T-cell (primary cell): ENCODE measurements at regions of chr3 and their contacts with region 1.

Region 1: DNA sequence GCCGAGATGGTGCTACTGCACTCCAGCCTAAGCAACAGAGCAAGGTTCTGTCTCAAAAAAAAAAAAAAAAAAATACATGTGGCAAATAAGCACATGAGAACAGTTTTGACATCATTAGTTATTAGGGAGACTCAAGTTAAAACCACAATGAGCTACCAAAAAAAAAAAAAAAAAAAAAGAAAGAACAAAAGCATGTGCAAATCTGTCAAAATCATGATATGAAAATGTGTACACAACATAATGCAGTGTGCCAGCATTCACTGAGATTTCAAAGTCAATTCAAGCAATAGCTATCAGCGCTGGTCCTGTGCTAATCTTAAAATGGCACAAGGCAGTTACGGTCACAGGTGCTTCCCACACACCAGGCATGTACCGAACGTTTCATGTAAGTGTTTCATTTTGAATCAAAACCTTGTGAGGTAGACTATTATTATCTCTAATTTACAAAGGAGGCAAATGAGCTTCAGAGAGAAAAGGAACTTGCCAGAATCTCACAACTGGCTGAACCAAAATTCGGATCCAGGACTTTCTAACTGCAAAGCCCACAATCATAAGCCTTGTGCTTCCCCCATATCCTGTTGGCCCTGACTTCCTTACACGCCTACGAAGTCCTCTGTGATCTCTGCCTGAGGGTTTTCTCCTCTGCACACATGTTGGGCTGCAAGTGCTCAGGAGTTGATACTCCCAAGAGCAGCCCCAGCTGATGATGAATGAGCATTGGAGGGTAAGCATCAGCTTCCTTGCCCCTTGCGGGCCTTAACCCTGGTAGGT is 200.1 kb upstream of the PROK2 start:
- DNase-seq: peak in 2 of 35 experiments; percentile 5 to 21
- ATAC-seq: peak; percentile 31 to 82 (median 54)
- H3K4me3 ChIP-seq: peak overlapping the region in 1 of 2 donors; percentile 5
- H3K4me3 Mint-ChIP-seq: peak overlapping the region; percentile 40 to 66 (median 46)
- H3K27ac ChIP-seq: no peak overlapping the region
- H3K27ac Mint-ChIP-seq: peak overlapping the region in 1 of 2 donors; percentile 60
- H3K4me1 ChIP-seq: peaks cover 2 to 4% of the 10 kb centered on the region in 2 experiments
- H3K4me1 Mint-ChIP-seq: peaks cover 9 to 13% (median 13%) of the 10 kb centered on the region in 3 donors
- H3K27me3 ChIP-seq: no peaks in the 10 kb centered on the region
- H3K27me3 Mint-ChIP-seq: no peaks in the 10 kb centered on the region

Region 2: GRCh38 chr3:71873093-71873611 is 111.9 kb before region 1 on chr3:
- CTCF ChIA-PET with region 1: no interaction called
- POLR2A ChIA-PET with region 1: no interaction called
- DNase-seq: no peak
- ATAC-seq: no peak
- H3K4me3 ChIP-seq: no peak overlapping the region
- H3K4me3 Mint-ChIP-seq: peak overlapping the region in 1 of 3 donors; percentile 25
- H3K27ac ChIP-seq: no peak overlapping the region
- H3K27ac Mint-ChIP-seq: peak overlapping the region in 1 of 2 donors; percentile 22
- H3K4me1 ChIP-seq: peaks cover 0 to 3% of the 10 kb centered on the region in 2 experiments
- H3K4me1 Mint-ChIP-seq: peaks cover 13 to 18% (median 17%) of the 10 kb centered on the region in 3 donors
- H3K27me3 ChIP-seq: no peaks in the 10 kb centered on the region
- H3K27me3 Mint-ChIP-seq: peaks cover 0 to 7% of the 10 kb centered on the region in 2 donors

Region 3: DNA sequence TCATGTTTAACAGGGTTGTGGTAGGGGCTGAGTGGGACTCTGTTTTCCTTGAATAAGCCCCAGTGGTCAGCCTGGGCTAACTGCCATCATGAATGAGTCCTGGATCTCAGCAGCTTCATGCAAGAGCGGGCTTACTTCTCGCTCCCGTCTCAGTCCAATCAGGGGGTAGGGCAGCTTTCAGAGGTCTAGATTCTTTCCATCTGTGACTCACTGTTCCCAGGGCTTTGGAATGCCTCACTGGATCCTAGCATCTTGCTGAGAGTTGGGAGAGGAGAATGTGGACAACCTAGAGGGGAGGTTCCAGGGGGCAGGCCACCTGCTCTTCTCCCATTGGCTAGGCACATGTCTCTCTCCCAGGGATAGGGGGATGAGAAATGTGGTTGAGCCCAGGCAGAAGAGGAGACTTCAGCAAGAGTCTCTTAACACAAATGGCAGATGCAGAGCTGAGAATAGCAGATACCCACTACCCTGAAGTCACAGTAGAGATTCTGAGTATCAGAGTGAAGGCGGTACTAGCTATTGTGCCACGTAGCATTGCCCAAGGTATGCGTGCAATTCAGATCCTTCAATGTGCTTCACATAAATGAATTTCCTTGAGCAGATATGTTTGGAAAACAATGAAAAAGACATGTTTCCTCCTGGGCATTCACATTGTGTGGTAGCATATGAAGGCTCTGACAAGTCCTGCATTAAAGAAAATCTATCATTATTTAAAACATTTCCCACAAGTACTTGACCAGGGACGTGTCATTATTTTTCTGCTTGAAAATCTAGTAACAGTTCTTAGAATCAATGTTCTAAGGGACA is 57.6 kb after region 1 on chr3:
- CTCF ChIA-PET with region 1: no interaction called
- POLR2A ChIA-PET with region 1: interaction called in 1 of 2 experiments, 12 read pairs
- DNase-seq: no peak
- ATAC-seq: no peak
- H3K4me3 ChIP-seq: no peak overlapping the region
- H3K4me3 Mint-ChIP-seq: no peak overlapping the region
- H3K27ac ChIP-seq: no peak overlapping the region
- H3K27ac Mint-ChIP-seq: no peak overlapping the region
- H3K4me1 ChIP-seq: no peaks in the 10 kb centered on the region
- H3K4me1 Mint-ChIP-seq: no peaks in the 10 kb centered on the region
- H3K27me3 ChIP-seq: peaks cover 0 to 22% of the 10 kb centered on the region in 2 experiments
- H3K27me3 Mint-ChIP-seq: peaks cover 11 to 16% of the 10 kb centered on the region in 2 donors

Region 4: GRCh38 chr3:72126441-72127223 is 141.6 kb after region 1 on chr3:
- CTCF ChIA-PET with region 1: no interaction called
- POLR2A ChIA-PET with region 1: interaction called in 1 of 2 experiments, 17 read pairs
- DNase-seq: no peak
- ATAC-seq: no peak
- H3K4me3 ChIP-seq: no peak overlapping the region
- H3K4me3 Mint-ChIP-seq: no peak overlapping the region
- H3K27ac ChIP-seq: no peak overlapping the region
- H3K27ac Mint-ChIP-seq: no peak overlapping the region
- H3K4me1 ChIP-seq: no peaks in the 10 kb centered on the region
- H3K4me1 Mint-ChIP-seq: no peaks in the 10 kb centered on the region
- H3K27me3 ChIP-seq: no peaks in the 10 kb centered on the region
- H3K27me3 Mint-ChIP-seq: no peaks in the 10 kb centered on the region